AG04450 (cell line): ENCODE measurements at regions of chr20 and their contacts with region 1.

Region 1: DNA sequence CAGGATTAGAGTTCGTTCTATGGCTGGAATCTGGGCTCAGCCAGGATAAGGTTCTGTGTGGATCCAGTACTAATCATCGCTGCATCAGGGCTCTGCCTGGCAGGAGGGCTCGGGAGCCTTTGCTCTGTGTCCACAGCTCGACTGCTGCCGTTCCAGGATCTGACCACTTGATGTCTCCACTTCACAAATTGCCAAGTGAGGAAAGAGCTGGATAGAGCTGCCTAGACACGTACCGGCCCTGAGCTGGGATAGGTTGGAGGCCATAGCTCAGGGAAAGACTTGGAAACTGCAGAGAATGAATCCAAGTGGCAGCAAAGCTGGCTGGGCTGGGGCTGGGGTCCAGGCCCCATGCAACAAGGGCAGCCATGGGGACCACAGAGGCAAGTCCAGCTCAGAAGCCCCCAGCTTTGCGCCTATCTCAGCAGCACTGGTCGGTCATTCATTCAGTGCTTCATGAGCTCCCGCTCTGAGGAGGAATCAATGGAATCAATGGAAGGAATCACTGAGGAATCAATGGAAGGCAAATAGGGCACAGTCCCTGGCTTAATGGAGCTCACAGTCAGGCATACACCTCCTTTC is 38.0 kb upstream of the TOP1 start:
- DNase-seq: peak; percentile 75
- H3K4me3 ChIP-seq: no peak overlapping the region
- H3K27ac ChIP-seq: no peak overlapping the region
- H3K27me3 ChIP-seq: no peaks in the 10 kb centered on the region
- CTCF ChIP-seq: peak; percentile 94

Region 2: DNA sequence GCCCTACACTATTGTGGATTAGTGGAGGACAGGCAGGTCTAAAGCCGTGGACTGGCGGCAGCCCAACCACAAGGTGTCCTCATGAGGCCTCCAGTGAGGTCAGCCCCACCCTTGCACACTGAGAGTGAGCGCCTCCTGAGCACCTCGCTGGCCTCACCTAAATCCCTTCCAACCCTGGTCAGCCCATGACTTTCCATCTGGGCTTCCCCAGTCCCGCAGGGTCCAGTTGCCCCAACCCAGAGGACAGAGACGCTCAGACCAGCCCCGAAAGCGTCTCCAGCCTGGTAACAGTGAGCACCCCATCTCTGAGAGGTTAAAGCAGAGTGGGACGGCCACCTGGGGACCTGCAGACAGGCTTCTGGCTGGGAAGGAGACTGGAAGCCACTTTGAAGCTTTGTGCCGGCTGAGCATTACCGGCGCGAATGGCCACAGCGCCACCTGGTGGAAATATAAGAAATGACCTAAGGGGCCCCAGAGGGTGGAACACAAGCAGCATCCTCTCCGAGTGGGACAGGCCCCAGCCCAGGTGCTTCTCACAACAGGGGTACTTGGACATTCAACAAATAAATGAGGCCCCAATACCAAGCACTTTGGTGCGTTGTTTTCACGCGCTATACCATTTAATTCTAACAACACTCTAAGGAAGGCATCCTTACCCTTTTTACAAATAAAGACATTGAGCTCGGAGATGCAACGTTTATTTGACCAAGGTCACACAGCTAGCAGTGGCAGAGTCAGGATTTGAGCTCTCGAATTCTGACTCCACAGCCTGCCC is 27.7 kb before region 1 on chr20:
- CTCF ChIA-PET with region 1: interaction called, 21 read pairs
- POLR2A ChIA-PET with region 1: no interaction called
- DNase-seq: no peak
- H3K4me3 ChIP-seq: no peak overlapping the region
- H3K27ac ChIP-seq: no peak overlapping the region
- H3K27me3 ChIP-seq: no peaks in the 10 kb centered on the region
- CTCF ChIP-seq: peak; percentile 85

Region 3: GRCh38 chr20:40980106-40980827 is 10.4 kb before region 1 on chr20:
- CTCF ChIA-PET with region 1: interaction called, 13 read pairs
- POLR2A ChIA-PET with region 1: no interaction called
- DNase-seq: no peak
- H3K4me3 ChIP-seq: no peak overlapping the region
- H3K27ac ChIP-seq: no peak overlapping the region
- H3K27me3 ChIP-seq: no peaks in the 10 kb centered on the region
- CTCF ChIP-seq: no peak

Region 4: GRCh38 chr20:41030531-41031244 is 40.1 kb after region 1 on chr20:
- CTCF ChIA-PET with region 1: interaction called, 17 read pairs
- POLR2A ChIA-PET with region 1: interaction called, 6 read pairs
- DNase-seq: peak; percentile 51
- H3K4me3 ChIP-seq: peak overlapping the region; percentile 89
- H3K27ac ChIP-seq: no peak overlapping the region
- H3K27me3 ChIP-seq: no peaks in the 10 kb centered on the region
- CTCF ChIP-seq: no peak

Region 5: DNA sequence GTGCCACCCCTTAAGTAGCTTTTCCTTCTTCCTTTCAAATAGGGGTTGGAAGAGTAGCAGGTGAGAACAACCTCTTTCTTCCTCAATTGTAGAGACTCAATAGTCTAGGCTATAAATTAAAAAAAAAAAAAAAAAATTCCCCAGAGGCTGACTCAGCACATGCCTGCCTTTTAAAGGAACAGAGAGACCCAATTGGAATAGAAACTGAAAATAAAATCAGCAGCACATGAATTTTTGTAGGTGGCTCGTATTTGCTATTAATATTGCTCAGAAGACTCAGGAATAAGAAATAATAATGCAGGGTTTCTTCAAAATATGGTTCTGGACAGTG is 57.3 kb after region 1 on chr20:
- CTCF ChIA-PET with region 1: interaction called, 13 read pairs
- POLR2A ChIA-PET with region 1: no interaction called
- DNase-seq: no peak
- H3K4me3 ChIP-seq: peak overlapping the region; percentile 29
- H3K27ac ChIP-seq: no peak overlapping the region
- H3K27me3 ChIP-seq: no peaks in the 10 kb centered on the region
- CTCF ChIP-seq: no peak

Region 6: DNA sequence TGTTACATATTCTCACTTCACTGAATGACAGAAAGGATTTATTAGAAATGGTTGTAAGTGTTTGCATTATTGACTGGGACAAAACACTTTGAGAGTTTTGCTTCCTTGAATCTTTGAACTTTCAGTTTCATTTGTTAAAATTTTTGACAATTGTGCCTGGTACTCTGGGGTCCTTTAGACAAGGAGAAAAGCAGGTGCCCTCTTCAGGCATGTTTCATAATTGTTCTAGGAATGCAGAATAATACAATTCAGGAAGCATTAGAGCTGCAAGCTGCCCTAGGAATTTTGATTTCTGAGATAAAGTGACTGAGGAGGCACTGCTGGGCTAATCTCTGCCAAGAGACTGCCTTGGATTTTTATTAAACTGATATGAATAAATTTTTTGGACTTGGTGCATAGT is 87.7 kb after region 1 on chr20:
- CTCF ChIA-PET with region 1: interaction called, 41 read pairs
- POLR2A ChIA-PET with region 1: no interaction called
- DNase-seq: no peak
- H3K4me3 ChIP-seq: no peak overlapping the region
- H3K27ac ChIP-seq: no peak overlapping the region
- H3K27me3 ChIP-seq: no peaks in the 10 kb centered on the region
- CTCF ChIP-seq: peak; percentile 65

Region 7: GRCh38 chr20:41095110-41095969 is 104.7 kb after region 1 on chr20:
- CTCF ChIA-PET with region 1: interaction called, 125 read pairs
- POLR2A ChIA-PET with region 1: interaction called, 4 read pairs
- DNase-seq: no peak
- H3K4me3 ChIP-seq: no peak overlapping the region
- H3K27ac ChIP-seq: no peak overlapping the region
- H3K27me3 ChIP-seq: no peaks in the 10 kb centered on the region
- CTCF ChIP-seq: peak; percentile 84